PC-9 (cell line): ENCODE measurements at regions of chr12 and their contacts with region 1.

Region 1: GRCh38 chr12:50452795-50453194 is 52.0 kb upstream of the DIP2B start:
- DNase-seq: no peak
- H3K4me3 ChIP-seq: no peak overlapping the region
- H3K27ac ChIP-seq: no peak overlapping the region
- H3K4me1 ChIP-seq: no peaks in the 10 kb centered on the region; the same call in 1 of the 2 replicates
- H3K27me3 ChIP-seq: no peaks in the 10 kb centered on the region
- CTCF ChIP-seq: no peak

Region 2: DNA sequence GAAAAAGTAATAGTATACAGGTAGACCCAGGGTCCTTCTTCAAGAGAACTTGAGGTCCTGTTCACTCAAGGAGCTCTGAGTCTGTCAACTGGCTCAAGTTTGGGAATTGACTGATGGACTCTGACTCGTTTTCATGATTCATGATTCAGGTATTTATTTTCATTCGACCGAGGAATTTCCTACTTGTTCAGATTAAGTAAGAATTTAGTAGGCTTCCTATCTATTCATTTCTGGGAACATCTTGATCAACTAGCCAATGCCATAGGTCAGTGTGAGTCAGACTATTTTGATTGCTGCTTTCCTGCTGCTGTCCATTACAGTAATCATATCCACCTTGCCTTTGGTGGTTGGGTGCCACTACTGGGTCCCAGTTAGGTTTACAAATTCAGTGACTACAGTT is 62.5 kb before region 1 on chr12:
- CTCF ChIA-PET with region 1: interaction called, 14 read pairs
- POLR2A ChIA-PET with region 1: interaction called, 4 read pairs
- intact Hi-C with region 1: no loop called
- DNase-seq: peak; percentile 33 to 96
- H3K4me3 ChIP-seq: no peak overlapping the region
- H3K27ac ChIP-seq: peak overlapping the region; percentile 64
- H3K4me1 ChIP-seq: peaks cover 37% of the 10 kb centered on the region
- H3K27me3 ChIP-seq: no peaks in the 10 kb centered on the region
- CTCF ChIP-seq: no peak

Region 3: GRCh38 chr12:50960130-50960529 is 507.3 kb after region 1 on chr12:
- CTCF ChIA-PET with region 1: no interaction called
- POLR2A ChIA-PET with region 1: no interaction called
- intact Hi-C with region 1: no loop called
- DNase-seq: no peak
- H3K4me3 ChIP-seq: no peak overlapping the region
- H3K27ac ChIP-seq: no peak overlapping the region
- H3K4me1 ChIP-seq: no peaks in the 10 kb centered on the region
- H3K27me3 ChIP-seq: no peaks in the 10 kb centered on the region
- CTCF ChIP-seq: no peak